Activated CD4-positive, alpha-beta memory T cell treated with anti-CD3 and anti-CD28 coated beads, Interleukin-2, amount 10 ng/mL, durations not matched to agents 7 days and 5 days (primary cell): ENCODE measurements at regions of chr1 and their contacts with region 1.

Region 1: DNA sequence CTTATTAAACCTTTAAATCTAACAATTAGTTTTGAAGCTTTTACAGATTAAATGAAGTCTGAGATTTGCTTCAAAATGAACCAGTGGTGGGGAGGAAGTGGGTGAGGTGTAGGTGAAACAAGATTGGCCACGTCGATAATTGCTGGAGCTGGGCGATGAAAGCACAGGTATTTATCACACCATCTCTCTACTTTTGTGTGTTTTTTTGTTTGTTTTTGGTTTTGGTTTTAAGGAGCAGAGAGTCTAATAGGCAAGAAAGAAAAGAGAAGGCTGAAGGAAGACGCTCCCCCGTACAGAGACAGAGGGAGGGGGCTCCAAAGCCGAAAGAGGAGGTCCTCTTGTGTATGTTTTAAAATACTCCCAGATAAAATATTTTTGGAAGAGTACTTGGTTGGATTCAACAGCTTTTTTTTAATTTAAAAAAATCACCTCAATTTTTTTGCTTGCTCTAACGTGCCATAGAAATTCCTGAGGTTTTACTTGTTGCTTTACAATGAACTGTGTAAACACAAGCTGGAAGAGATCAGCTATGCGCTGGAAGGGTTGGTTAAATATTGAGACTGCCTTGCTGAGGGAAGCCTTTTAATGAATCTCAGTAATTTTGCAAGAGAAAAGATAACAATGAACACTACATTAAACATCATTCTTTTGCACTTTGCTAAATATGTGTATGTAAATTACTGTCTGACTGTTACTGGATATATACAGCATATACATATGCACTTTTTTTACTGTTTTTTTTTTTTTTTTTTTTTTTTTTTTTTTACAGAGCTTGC is 6.7 kb upstream of the LGALS8 start:
- DNase-seq: peak; percentile 76
- H3K4me3 Mint-ChIP-seq: peak overlapping the region; percentile 70
- H3K27ac Mint-ChIP-seq: peak overlapping the region; percentile 86
- H3K4me1 Mint-ChIP-seq: peaks cover 47% of the 10 kb centered on the region
- H3K27me3 Mint-ChIP-seq: peaks cover 5% of the 10 kb centered on the region

Region 2: GRCh38 chr1:236502885-236503639 is 14.1 kb before region 1 on chr1:
- CTCF ChIA-PET with region 1: interaction called, 3 read pairs
- POLR2A ChIA-PET with region 1: interaction called, 10 read pairs
- DNase-seq: no peak
- H3K4me3 Mint-ChIP-seq: no peak overlapping the region
- H3K27ac Mint-ChIP-seq: no peak overlapping the region
- H3K4me1 Mint-ChIP-seq: peaks cover 22% of the 10 kb centered on the region
- H3K27me3 Mint-ChIP-seq: peaks cover 2% of the 10 kb centered on the region

Region 3: GRCh38 chr1:236541710-236542109 is 24.6 kb after region 1 on chr1:
- CTCF ChIA-PET with region 1: no interaction called
- POLR2A ChIA-PET with region 1: no interaction called
- DNase-seq: no peak
- H3K4me3 Mint-ChIP-seq: no peak overlapping the region
- H3K27ac Mint-ChIP-seq: no peak overlapping the region
- H3K4me1 Mint-ChIP-seq: peaks cover 33% of the 10 kb centered on the region
- H3K27me3 Mint-ChIP-seq: no peaks in the 10 kb centered on the region